ENCODE measurements at regions of chr10 and their contacts with region 1.

Region 1: GRCh38 chr10:60652628-60653027 is 125.7 kb upstream of the CDK1 start:
- DNase-seq: no peak
- H3K4me3 ChIP-seq: no peak overlapping the region
- H3K27ac ChIP-seq: no peak overlapping the region
- H3K4me1 ChIP-seq: peaks cover 3% of the 10 kb centered on the region
- H3K27me3 ChIP-seq: no peaks in the 10 kb centered on the region
- CTCF ChIP-seq: no peak

Region 2: DNA sequence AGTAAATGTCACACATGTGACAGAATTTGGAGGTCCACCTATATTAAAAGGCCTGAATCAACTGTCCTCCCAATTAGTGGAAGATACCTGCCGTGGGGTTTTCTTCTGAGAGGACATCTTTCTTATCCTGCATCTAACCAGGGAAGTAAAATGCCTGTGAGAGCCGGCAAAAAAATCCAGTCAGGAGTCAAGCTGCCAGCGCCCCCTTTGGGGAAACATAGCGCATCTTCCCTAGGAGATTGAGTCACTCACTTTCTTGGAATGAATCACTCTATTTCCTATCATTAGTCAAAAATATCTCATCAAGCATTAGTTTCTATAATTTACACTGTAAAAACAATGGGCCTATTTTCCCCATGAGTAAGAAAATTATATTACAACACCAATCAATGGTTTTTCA is 196.6 kb before region 1 on chr10:
- CTCF ChIA-PET with region 1: no interaction called
- dilution Hi-C with region 1: no loop called
- in situ Hi-C with region 1: loop called in 1 of 2 experiments (anchors 10 kb)
- intact Hi-C with region 1: no loop called
- DNase-seq: no peak
- H3K4me3 ChIP-seq: no peak overlapping the region
- H3K27ac ChIP-seq: no peak overlapping the region
- H3K4me1 ChIP-seq: no peaks in the 10 kb centered on the region
- H3K27me3 ChIP-seq: no peaks in the 10 kb centered on the region
- CTCF ChIP-seq: peak in 1 of 2 donors; percentile 5

Region 3: GRCh38 chr10:60549686-60550085 is 102.9 kb before region 1 on chr10:
- CTCF ChIA-PET with region 1: no interaction called
- dilution Hi-C with region 1: no loop called
- in situ Hi-C with region 1: loop called in 1 of 2 experiments (anchors 10 kb)
- intact Hi-C with region 1: loop called (anchors 1 kb)
- DNase-seq: peak; percentile 38
- H3K4me3 ChIP-seq: no peak overlapping the region
- H3K27ac ChIP-seq: no peak overlapping the region
- H3K4me1 ChIP-seq: no peaks in the 10 kb centered on the region
- H3K27me3 ChIP-seq: no peaks in the 10 kb centered on the region
- CTCF ChIP-seq: peak; percentile 30 to 61

Region 4: GRCh38 chr10:60618861-60619260 is 33.8 kb before region 1 on chr10:
- CTCF ChIA-PET with region 1: no interaction called
- dilution Hi-C with region 1: no loop called
- in situ Hi-C with region 1: no loop called
- intact Hi-C with region 1: no loop called
- DNase-seq: no peak
- H3K4me3 ChIP-seq: no peak overlapping the region
- H3K27ac ChIP-seq: no peak overlapping the region
- H3K4me1 ChIP-seq: no peaks in the 10 kb centered on the region
- H3K27me3 ChIP-seq: no peaks in the 10 kb centered on the region
- CTCF ChIP-seq: peak in 1 of 2 donors; percentile 2

Region 5: GRCh38 chr10:60778214-60779029 is 125.8 kb after region 1 on chr10 and contains the start of gene CDK1:
- CTCF ChIA-PET with region 1: no interaction called
- dilution Hi-C with region 1: no loop called
- in situ Hi-C with region 1: loop called in 1 of 2 experiments (anchors 10 kb)
- intact Hi-C with region 1: no loop called
- DNase-seq: peak; percentile 99
- H3K4me3 ChIP-seq: peak within 1 kb of the TSS; percentile 79 to 95 (median 95)
- H3K27ac ChIP-seq: peak within 1 kb of the TSS; percentile 72
- H3K4me1 ChIP-seq: peaks cover 11% of the 10 kb centered on the region
- H3K27me3 ChIP-seq: no peaks in the 10 kb centered on the region
- CTCF ChIP-seq: no peak
- total RNA-seq, gene CDK1: 4.8 to 49.3 TPM

Measured in mammary epithelial cell (primary cell).